ENCODE measurements at regions of chr15 and their contacts with region 1.

Region 1: DNA sequence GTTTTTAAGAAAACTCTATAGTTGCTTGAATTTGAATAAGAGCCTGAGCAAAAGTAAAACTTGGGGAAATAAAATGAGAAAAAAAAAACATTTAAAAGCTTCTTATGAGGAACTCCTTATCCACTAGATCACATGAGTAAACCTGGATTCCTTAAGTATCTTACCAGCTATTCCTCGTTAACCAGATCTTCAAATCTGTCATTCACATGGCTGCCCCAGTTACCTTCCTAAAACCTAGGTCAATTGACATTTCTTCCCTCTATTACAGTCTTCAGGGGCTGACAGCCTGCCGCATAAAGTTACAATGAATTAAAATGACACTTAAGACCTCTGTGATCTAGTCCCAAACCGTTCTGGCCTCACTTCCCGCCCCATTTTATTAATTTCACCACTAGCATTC is 583.6 kb downstream of the NR2F2 start:
- DNase-seq: no peak
- ATAC-seq: no peak
- H3K4me3 Mint-ChIP-seq: no peak overlapping the region
- H3K27ac Mint-ChIP-seq: no peak overlapping the region
- H3K4me1 Mint-ChIP-seq: no peaks in the 10 kb centered on the region
- H3K27me3 Mint-ChIP-seq: no peaks in the 10 kb centered on the region
- CTCF ChIP-seq: no peak

Region 2: DNA sequence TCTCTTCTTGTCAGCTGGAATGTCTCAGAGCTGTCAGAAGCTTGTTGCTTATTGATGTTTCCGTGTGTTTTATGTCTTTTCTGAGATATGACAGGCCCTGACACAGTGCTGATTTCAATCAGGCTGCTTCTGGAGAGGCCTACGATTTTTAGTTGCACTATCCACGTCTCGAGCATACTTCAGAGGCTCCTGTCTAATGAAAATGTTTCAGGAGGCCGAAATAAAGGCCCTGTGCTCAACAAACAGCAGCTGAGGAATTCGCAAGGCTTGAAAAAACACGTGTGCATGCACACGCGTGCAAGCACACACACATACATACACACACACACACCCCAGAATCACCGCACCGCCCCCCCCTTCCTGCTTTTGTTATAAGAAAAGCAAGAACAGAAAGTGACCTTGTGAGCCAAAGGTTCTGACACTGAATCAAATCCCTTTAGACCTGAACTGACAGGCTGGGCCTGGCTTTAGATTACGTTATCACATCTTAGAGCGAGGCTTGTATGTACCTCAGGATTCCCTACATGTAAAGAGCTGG is 287.0 kb before region 1 on chr15:
- CTCF ChIA-PET with region 1: no interaction called
- POLR2A ChIA-PET with region 1: interaction called, 12 read pairs
- DNase-seq: no peak
- ATAC-seq: no peak
- H3K4me3 Mint-ChIP-seq: no peak overlapping the region
- H3K27ac Mint-ChIP-seq: no peak overlapping the region
- H3K4me1 Mint-ChIP-seq: no peaks in the 10 kb centered on the region
- H3K27me3 Mint-ChIP-seq: no peaks in the 10 kb centered on the region
- CTCF ChIP-seq: no peak

Region 3: DNA sequence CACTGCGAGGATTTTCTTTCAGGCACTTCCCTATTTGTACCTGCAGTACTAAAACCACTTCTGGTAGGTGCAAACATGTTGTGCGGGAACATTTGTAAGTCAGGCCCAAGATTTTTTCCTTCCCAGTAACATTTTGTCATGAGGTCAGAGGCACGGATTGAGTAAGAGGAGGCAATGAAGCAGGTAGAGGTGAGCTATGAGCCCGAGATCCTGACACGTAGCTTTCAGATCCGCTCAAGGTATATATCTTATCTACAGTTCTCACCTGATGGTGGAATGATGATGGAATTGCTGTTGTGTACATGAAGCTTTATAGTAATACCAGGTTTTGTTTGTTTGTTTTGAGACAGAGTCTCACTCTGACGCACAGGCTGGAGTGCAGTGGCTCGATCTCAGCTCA is 86.1 kb before region 1 on chr15:
- CTCF ChIA-PET with region 1: no interaction called
- POLR2A ChIA-PET with region 1: no interaction called
- DNase-seq: no peak
- ATAC-seq: no peak
- H3K4me3 Mint-ChIP-seq: no peak overlapping the region
- H3K27ac Mint-ChIP-seq: no peak overlapping the region
- H3K4me1 Mint-ChIP-seq: no peaks in the 10 kb centered on the region
- H3K27me3 Mint-ChIP-seq: no peaks in the 10 kb centered on the region
- CTCF ChIP-seq: no peak

Measured in WTC11 (cell line).